Left ventricle myocardium inferior (tissue), 1 donor: ENCODE measurements at regions of chr12 and their contacts with region 1.

Region 1: DNA sequence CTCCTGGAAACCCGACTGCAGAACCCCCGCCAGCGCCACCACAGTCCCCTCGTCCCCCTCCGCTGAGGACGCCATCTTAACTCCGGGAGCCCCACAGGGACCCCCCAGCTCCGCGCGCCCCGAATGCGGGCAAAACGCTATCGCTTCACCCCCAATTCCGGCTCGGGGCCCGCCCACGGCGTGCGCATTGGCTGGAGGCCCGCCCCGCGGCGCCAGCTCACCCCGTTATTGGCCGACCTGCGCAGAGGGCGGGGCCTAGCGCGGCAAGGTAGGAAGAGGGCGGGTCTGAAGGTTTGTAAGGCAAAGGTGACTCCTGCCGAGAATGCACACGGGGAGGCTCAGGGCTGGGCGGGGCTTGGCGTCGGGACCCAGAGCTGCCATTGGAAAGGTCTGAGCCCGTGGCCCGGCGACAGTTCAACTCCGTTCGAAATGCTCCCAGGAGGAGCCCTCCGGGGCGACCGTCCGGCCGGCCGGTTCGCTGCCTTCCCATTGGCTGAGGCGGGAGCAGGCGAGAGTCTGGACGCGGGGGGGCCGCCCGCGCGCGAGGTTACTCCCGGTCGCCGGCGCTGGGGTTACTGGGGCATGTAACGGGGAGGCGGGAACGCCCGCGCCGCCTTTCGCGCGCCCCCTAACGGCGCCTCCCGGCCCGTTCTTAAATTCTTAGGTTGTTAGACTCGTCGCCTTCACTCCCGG is at the start of gene LPCAT3:
- DNase-seq: peak; percentile 99
- H3K4me3 ChIP-seq: peak within 1 kb of the TSS; percentile 75
- H3K27ac ChIP-seq: peak within 1 kb of the TSS; percentile 92
- H3K4me1 ChIP-seq: peaks cover 41% of the 10 kb centered on the region
- H3K27me3 ChIP-seq: no peaks in the 10 kb centered on the region
- CTCF ChIP-seq: peak; percentile 90
- total RNA-seq, gene LPCAT3: 35.1 TPM

Region 2: DNA sequence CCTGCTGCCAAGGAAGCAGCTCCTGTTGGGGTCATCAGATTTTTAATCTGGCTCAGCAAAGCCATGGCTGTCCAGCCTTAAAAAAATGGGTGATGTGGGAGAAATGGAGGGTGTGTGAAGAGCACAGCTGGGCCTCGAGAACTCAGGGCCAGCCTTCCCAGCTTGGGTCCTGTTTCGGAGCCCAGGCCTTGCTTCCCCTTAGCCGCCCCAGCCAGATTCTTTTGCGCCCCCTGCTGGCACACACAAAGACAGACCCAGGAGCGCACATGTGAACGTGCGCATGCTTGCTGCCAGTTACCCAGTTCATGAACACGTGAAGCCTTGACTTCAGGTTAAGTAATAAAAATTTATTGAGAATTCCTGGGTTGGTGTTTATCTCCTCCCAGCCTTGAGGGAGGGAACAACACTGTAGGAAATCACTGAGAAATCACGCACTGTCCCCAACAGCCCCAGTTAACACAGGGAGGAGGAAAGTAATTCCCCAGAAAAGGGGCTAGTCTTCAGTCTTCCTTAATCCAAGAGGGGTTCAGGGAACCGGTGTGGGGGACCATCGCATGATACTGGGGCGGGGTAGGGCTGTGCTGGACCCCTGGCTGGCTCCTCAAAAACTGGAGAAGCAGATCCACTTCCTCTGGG is 53.4 kb before region 1 on chr12:
- intact Hi-C with region 1: loop called (anchors 10 kb)
- DNase-seq: peak; percentile 87
- H3K4me3 ChIP-seq: no peak overlapping the region
- H3K27ac ChIP-seq: peak overlapping the region; percentile 86
- H3K4me1 ChIP-seq: peaks cover 71% of the 10 kb centered on the region
- H3K27me3 ChIP-seq: no peaks in the 10 kb centered on the region
- CTCF ChIP-seq: peak; percentile 93

Region 3: GRCh38 chr12:6978609-6979011 is 39.9 kb before region 1 on chr12:
- intact Hi-C with region 1: no loop called
- DNase-seq: no peak
- H3K4me3 ChIP-seq: no peak overlapping the region
- H3K27ac ChIP-seq: peak overlapping the region; percentile 76
- H3K4me1 ChIP-seq: peaks cover 29% of the 10 kb centered on the region
- H3K27me3 ChIP-seq: no peaks in the 10 kb centered on the region
- CTCF ChIP-seq: no peak